PC-9 (cell line): ENCODE measurements at regions of chr2 and their contacts with region 1.

Region 1: DNA sequence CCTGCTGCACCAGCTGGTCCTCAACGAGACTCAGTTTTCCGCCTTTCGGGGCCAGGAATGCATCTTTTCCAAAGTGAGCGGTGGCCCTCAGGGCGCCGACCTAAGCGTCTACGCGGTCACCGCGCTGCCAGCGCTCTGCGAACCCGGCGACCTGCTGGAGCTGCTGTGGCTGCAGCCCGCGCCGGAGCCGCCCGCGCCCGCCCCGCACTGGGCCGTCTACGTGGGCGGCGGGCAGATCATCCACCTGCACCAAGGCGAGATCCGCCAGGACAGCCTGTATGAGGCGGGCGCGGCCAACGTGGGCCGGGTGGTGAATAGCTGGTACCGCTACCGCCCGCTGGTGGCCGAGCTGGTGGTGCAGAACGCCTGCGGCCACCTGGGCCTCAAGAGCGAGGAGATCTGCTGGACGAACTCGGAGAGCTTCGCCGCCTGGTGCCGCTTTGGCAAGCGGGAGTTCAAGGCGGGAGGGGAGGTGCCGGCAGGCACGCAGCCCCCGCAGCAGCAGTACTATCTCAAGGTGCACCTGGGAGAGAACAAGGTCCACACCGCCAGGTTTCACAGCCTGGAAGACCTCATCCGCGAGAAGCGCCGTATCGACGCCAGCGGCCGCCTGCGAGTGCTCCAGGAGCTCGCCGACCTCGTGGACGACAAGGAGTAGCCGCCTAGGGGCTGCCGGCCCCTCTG is 1.8 kb downstream of the LRATD1 start:
- DNase-seq: peak in 1 of 2 experiments; percentile 70
- H3K4me3 ChIP-seq: peak overlapping the region; percentile 52; the same call in 1 of the 2 replicates
- H3K27ac ChIP-seq: no peak overlapping the region
- H3K4me1 ChIP-seq: no peaks in the 10 kb centered on the region
- H3K27me3 ChIP-seq: peaks cover 18% of the 10 kb centered on the region; the same call in 1 of the 2 replicates
- CTCF ChIP-seq: peak; percentile 51

Region 2: DNA sequence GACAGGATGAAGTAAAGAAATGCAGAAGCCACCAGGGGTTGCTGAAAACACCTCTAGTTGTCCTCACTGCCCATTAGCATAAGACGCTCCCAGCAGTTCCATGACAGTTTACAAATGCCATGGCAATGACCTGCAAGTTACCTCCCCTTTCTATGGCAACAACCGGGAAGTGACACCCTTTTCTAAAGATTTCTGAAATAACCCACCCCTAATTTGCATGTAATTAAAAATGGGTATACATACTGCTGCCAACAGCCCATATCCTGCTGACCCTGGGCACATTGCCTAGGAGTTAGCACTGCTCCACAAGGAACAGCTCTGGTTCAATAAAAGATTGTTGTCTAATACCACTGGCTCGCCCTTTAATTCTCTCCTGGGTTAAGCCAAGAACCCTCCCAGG is 180.1 kb before region 1 on chr2:
- CTCF ChIA-PET with region 1: no interaction called
- POLR2A ChIA-PET with region 1: no interaction called
- intact Hi-C with region 1: loop called (anchors 1 kb)
- DNase-seq: peak in 1 of 2 experiments; percentile 1
- H3K4me3 ChIP-seq: no peak overlapping the region
- H3K27ac ChIP-seq: no peak overlapping the region
- H3K4me1 ChIP-seq: no peaks in the 10 kb centered on the region
- H3K27me3 ChIP-seq: no peaks in the 10 kb centered on the region
- CTCF ChIP-seq: no peak

Region 3: GRCh38 chr2:14554849-14555545 is 79.3 kb before region 1 on chr2:
- CTCF ChIA-PET with region 1: no interaction called
- POLR2A ChIA-PET with region 1: interaction called, 11 read pairs
- intact Hi-C with region 1: no loop called
- DNase-seq: no peak
- H3K4me3 ChIP-seq: no peak overlapping the region
- H3K27ac ChIP-seq: no peak overlapping the region
- H3K4me1 ChIP-seq: no peaks in the 10 kb centered on the region
- H3K27me3 ChIP-seq: no peaks in the 10 kb centered on the region
- CTCF ChIP-seq: no peak

Region 4: GRCh38 chr2:14831458-14831857 is 197.1 kb after region 1 on chr2:
- CTCF ChIA-PET with region 1: no interaction called
- POLR2A ChIA-PET with region 1: no interaction called
- intact Hi-C with region 1: loop called (anchors 1 kb)
- DNase-seq: no peak
- H3K4me3 ChIP-seq: no peak overlapping the region
- H3K27ac ChIP-seq: no peak overlapping the region
- H3K4me1 ChIP-seq: peaks cover 22% of the 10 kb centered on the region
- H3K27me3 ChIP-seq: no peaks in the 10 kb centered on the region
- CTCF ChIP-seq: peak; percentile 37; the same call in 1 of the 2 replicates

Region 5: DNA sequence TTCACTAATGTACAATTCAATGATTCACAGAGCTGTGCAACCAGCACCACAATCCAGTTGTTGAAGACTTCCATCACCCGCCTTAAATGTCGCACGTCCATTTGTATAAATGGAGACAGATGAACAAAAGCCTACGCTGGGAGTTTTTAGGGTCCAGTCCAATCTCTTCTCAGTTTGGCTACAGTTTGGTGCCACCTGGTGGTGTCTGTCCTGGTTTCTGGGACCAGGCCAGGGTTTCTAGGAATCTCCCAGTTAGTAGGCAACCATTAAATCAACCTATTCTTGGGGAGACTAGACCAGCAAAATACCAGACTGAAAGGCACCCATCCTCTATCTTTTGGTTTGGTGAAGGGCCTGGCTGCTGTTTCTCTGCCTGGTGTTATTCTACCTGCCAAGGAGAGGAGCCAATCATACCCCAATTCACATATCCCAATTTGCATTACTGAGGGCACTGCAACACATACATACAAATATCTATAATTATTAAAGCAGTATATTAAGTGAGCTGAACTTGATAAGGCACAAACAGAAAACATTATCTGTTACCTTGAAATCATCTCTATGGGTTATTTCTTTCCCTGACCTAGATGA is 954.1 kb after region 1 on chr2:
- CTCF ChIA-PET with region 1: no interaction called
- POLR2A ChIA-PET with region 1: no interaction called
- intact Hi-C with region 1: loop called (anchors 10 kb)
- DNase-seq: peak in 1 of 2 experiments; percentile 55
- H3K4me3 ChIP-seq: no peak overlapping the region
- H3K27ac ChIP-seq: no peak overlapping the region
- H3K4me1 ChIP-seq: peaks cover 15% of the 10 kb centered on the region
- H3K27me3 ChIP-seq: no peaks in the 10 kb centered on the region
- CTCF ChIP-seq: peak; percentile 79